ENCODE measurements at regions of chr10 and their contacts with region 1.

Region 1: DNA sequence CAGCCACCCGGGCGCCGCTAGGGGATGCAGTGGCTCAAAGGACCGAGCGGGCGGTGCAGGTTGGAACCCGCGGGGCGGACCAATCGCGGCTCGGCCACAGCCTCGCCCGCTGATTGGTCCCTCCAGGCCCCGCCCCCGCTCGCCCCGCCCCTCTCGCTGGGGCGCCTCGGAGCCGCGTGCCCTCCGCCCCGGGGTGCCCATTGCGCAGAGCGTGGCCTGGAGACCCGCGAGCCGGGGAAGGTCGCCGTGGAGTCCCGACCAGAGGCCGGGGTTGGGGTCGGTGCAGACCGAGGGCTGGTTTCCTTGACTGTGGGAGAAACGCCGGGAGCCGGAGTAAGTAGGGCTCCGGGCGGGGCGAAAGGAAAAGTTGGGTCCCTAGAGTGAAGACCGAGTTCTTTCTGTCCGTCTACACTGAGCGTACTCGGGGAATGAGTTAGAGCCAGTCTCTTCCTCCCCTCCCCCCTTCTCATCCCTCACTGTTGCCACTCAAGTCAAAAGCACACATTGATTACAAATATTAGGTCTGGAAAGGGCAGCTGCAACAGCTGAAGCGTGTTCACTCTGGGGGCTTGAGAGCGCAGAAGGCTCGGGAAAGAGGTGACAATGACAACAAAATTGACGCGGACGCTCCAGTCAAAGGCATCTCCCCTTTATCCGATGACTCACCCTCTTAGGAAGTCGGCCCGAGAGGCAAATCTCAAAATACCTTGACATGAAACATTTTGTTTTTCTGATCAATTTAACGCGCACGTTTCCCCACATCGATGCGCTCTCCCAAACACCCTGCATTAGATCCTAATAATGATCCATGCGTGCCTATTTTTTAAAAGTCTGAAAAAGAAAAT is 820 bp upstream of the GATA3 start:
- DNase-seq: no peak
- ATAC-seq: peak; percentile 84
- H3K4me3 ChIP-seq: peak overlapping the region; percentile 54
- H3K27ac ChIP-seq: no peak overlapping the region
- H3K4me1 ChIP-seq: peaks cover 10% of the 10 kb centered on the region; the same call in 1 of the 2 replicates
- H3K27me3 ChIP-seq: peaks cover 10 to 11% of the 10 kb centered on the region in 2 experiments
- CTCF ChIP-seq: peak; percentile 84 to 98 (median 96); a peak in 5 of 6 replicates
- EP300 ChIP-seq: no peak
- POLR2A ChIP-seq: peak; percentile 33; the same call in 1 of the 2 replicates
- RAD21 ChIP-seq: 0 out of 2 replicates have a peak, but pooled peaks have one; percentile 77

Region 2: GRCh38 chr10:7872041-7872442 is 181.6 kb before region 1 on chr10:
- CTCF ChIA-PET with region 1: no interaction called
- POLR2A ChIA-PET with region 1: no interaction called
- RAD21 ChIA-PET with region 1: no interaction called
- SMC1A ChIA-PET with region 1: no interaction called
- in situ Hi-C with region 1: no loop called
- intact Hi-C with region 1: loop called (anchors 5 kb)
- DNase-seq: no peak
- ATAC-seq: no peak
- H3K4me3 ChIP-seq: peak overlapping the region; percentile 47; the same call in 1 of the 2 replicates
- H3K27ac ChIP-seq: no peak overlapping the region
- H3K4me1 ChIP-seq: no peaks in the 10 kb centered on the region
- H3K27me3 ChIP-seq: no peaks in the 10 kb centered on the region
- CTCF ChIP-seq: peak; percentile 58 to 65 (median 62)
- EP300 ChIP-seq: no peak
- POLR2A ChIP-seq: no peak
- RAD21 ChIP-seq: peak; percentile 94

Region 3: DNA sequence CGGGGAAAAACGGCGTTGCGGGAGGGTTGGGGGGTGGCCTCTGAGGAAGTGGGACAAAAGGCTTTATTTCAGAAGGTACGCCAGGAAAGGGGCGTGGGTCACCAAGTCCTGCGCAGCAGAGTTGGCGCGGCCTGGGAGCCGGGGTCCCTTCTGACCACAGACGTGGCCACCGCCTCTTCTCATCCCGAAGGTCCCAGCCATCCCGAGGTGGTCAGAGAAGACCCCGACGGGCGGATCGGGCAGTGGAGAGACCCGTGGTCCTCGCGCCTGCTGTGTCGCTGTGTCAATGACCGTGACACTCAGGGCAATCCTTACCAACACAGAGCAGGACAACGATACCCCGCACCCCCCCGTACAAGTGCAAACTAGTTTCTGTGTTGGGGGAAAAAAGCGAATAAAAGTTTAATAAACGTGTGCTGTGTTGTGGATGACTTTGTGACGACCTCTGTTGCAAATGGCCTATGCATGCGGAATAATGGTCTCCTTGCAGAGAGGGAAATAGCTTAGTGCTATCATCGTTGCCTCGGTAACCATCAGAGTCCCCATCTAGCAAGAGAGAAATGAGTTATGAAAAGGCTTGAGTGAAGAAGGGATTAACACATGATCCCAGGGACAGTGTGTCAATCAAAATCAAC is 18.5 kb before region 1 on chr10:
- CTCF ChIA-PET with region 1: no interaction called
- POLR2A ChIA-PET with region 1: no interaction called
- RAD21 ChIA-PET with region 1: no interaction called
- SMC1A ChIA-PET with region 1: no interaction called
- in situ Hi-C with region 1: no loop called
- intact Hi-C with region 1: no loop called
- DNase-seq: no peak
- ATAC-seq: no peak
- H3K4me3 ChIP-seq: no peak overlapping the region
- H3K27ac ChIP-seq: no peak overlapping the region
- H3K4me1 ChIP-seq: no peaks in the 10 kb centered on the region
- H3K27me3 ChIP-seq: peaks cover 18 to 28% of the 10 kb centered on the region in 2 experiments
- CTCF ChIP-seq: no peak
- EP300 ChIP-seq: no peak
- POLR2A ChIP-seq: no peak
- RAD21 ChIP-seq: no peak

Region 4: GRCh38 chr10:8365935-8366911 is 312.6 kb after region 1 on chr10:
- CTCF ChIA-PET with region 1: no interaction called
- POLR2A ChIA-PET with region 1: no interaction called
- RAD21 ChIA-PET with region 1: no interaction called
- SMC1A ChIA-PET with region 1: no interaction called
- in situ Hi-C with region 1: no loop called
- intact Hi-C with region 1: loop called (anchors 10 kb)
- DNase-seq: peak; percentile 12
- ATAC-seq: peak; percentile 76
- H3K4me3 ChIP-seq: no peak overlapping the region
- H3K27ac ChIP-seq: no peak overlapping the region
- H3K4me1 ChIP-seq: peaks cover 2% of the 10 kb centered on the region
- H3K27me3 ChIP-seq: no peaks in the 10 kb centered on the region
- CTCF ChIP-seq: 0 out of 6 replicates have a peak, but pooled peaks of 1 of the 3 experiments have one; percentile 2
- EP300 ChIP-seq: no peak
- POLR2A ChIP-seq: no peak
- RAD21 ChIP-seq: no peak